Tibial artery (tissue), 4 donors: ENCODE measurements at regions of chr12 and their contacts with region 1.

Region 1: DNA sequence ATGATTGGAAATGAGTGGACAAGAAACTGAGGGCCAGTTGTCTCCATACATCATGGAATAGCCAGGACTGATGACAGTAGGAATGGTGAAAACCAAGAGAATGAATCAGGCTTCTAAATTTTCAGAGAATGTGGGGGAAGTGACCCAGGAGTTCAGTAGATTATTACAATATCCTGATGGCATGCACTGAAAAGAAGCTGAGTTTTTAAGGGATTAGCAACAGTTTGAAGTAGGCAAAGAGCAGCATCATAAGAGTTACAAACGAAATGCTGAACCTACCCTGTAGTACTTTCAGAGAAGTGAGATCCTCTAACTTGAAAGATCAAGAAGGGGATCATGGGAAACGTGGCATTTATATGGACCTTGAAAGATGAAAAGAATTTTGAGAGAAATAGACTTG is 13.2 kb downstream of the SLC2A14 start:
- DNase-seq: no peak
- H3K4me3 ChIP-seq: no peak overlapping the region
- H3K27ac ChIP-seq: no peak overlapping the region
- H3K4me1 ChIP-seq: peaks cover 0 to 11% (median 5%) of the 10 kb centered on the region in 4 donors
- H3K27me3 ChIP-seq: peaks cover 0 to 10% of the 10 kb centered on the region in 2 donors
- CTCF ChIP-seq: no peak

Region 2: GRCh38 chr12:7787574-7788300 is 71.8 kb before region 1 on chr12:
- intact Hi-C with region 1: no loop called
- DNase-seq: no peak
- H3K4me3 ChIP-seq: no peak overlapping the region
- H3K27ac ChIP-seq: no peak overlapping the region
- H3K4me1 ChIP-seq: no peaks in the 10 kb centered on the region
- H3K27me3 ChIP-seq: peaks cover 0 to 6% of the 10 kb centered on the region in 2 donors
- CTCF ChIP-seq: no peak

Region 3: DNA sequence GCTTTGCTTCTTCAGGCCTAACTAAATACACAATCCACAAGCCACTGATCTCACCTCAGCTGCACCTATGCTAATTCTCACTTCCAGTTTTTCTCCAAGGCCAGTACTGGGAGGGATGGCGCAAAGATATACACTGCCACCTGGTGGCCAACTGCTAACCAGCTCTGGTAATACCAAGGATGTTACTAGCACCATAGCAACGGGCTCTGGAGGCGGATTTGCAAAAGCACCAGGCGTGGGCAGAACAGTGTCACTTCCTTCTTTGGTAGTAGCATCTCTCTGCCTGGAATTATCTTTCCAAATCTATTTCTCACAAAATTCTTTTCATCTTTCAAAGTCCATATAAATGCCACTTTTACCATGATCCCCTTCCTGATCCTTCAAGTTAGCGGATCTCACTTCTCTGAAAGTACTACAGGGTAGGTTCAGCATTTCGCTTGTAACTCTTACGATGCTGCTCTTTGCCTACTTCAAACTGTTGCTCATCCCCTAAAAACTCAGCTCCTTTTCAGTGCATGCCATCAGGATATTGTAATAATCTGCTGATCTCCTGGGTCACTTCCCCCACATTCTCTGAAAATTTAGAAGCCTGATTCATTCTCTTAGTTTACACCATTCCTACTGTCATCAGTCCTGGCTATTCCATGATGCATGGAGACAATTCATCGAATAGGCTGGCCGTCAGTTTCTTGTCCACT is 135.9 kb after region 1 on chr12:
- intact Hi-C with region 1: loop called (anchors 5 kb)
- DNase-seq: peak; percentile 86 to 87
- H3K4me3 ChIP-seq: no peak overlapping the region
- H3K27ac ChIP-seq: no peak overlapping the region
- H3K4me1 ChIP-seq: no peaks in the 10 kb centered on the region
- H3K27me3 ChIP-seq: no peaks in the 10 kb centered on the region
- CTCF ChIP-seq: peak; percentile 79 to 88